Activated B cell treated with CpG ODN at 0.5 μM for 24 hours (primary cell): ENCODE measurements at regions of chr7 and their contacts with region 1.

Region 1: GRCh38 chr7:125661677-125662076 is 732.1 kb upstream of the POT1 start:
- DNase-seq: no peak
- ATAC-seq: no peak
- H3K4me3 Mint-ChIP-seq: no peak overlapping the region
- H3K27ac Mint-ChIP-seq: no peak overlapping the region
- H3K4me1 Mint-ChIP-seq: no peaks in the 10 kb centered on the region
- H3K27me3 Mint-ChIP-seq: no peaks in the 10 kb centered on the region
- CTCF ChIP-seq: no peak

Region 2: DNA sequence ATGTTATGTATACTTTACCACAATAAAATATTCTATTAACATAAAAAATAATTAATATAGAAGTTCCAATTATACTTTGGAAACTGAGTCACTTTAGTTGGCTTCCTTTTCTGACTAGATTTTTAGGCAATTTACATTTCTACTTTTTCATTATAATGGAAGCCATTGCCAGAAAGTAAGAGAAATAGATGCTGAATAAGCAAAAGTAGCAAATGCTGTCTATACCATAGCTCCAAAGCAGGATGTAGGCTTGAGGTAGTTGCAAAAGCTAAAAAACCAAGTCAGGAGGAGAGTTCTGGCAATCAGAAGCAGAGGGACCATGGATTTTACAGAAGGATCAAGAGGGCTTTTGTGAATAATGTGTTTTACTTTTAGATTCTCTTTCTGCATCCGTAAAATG is 1366.4 kb before region 1 on chr7:
- CTCF ChIA-PET with region 1: no interaction called
- POLR2A ChIA-PET with region 1: no interaction called
- intact Hi-C with region 1: loop called (anchors 5 kb)
- DNase-seq: no peak
- ATAC-seq: no peak
- H3K4me3 Mint-ChIP-seq: no peak overlapping the region
- H3K27ac Mint-ChIP-seq: no peak overlapping the region
- H3K4me1 Mint-ChIP-seq: no peaks in the 10 kb centered on the region
- H3K27me3 Mint-ChIP-seq: no peaks in the 10 kb centered on the region
- CTCF ChIP-seq: no peak